Right ventricle myocardium inferior (tissue), 1 donor: ENCODE measurements at regions of chr1 and their contacts with region 1.

Region 1: DNA sequence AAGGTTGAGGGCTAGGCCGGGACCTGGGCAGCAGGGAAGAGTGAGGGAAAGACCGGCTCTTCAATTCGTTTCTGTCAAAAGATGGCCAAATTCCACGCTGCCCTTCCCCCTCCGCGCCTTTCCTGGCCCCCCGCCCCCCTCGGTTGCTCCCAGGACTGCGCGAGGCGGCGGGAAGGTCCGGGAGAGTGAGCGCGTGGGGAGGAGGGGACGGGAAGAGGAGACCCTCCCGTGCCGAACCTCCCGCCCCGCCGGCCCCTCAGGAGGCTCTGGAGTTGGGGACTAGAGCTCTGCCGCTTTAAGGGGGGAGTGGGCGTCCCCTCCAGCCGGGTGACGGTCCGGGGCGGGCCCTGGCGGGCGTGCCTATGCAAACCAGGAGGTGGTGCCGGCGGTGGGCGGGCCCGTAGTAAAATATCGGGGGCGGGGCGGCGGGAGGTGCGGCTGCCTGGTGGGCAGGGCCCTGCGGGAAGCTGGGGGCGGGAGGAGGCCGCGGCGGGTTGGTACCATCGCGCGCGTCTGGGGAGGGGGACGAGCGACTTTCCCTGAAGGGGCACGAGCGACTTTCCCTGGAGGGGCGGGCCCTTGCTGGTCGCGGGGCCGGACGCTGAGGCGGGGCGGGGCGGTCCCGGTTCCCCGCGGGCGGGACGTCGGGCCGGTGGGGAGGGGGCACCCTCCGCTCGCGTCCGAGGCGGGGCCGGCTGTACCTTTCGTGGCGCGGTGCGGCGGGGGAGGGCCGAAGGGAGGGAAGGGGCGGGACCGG is 58.2 kb downstream of the BCL9 start:
- DNase-seq: peak; percentile 99
- ATAC-seq: peak; percentile 95

Region 2: DNA sequence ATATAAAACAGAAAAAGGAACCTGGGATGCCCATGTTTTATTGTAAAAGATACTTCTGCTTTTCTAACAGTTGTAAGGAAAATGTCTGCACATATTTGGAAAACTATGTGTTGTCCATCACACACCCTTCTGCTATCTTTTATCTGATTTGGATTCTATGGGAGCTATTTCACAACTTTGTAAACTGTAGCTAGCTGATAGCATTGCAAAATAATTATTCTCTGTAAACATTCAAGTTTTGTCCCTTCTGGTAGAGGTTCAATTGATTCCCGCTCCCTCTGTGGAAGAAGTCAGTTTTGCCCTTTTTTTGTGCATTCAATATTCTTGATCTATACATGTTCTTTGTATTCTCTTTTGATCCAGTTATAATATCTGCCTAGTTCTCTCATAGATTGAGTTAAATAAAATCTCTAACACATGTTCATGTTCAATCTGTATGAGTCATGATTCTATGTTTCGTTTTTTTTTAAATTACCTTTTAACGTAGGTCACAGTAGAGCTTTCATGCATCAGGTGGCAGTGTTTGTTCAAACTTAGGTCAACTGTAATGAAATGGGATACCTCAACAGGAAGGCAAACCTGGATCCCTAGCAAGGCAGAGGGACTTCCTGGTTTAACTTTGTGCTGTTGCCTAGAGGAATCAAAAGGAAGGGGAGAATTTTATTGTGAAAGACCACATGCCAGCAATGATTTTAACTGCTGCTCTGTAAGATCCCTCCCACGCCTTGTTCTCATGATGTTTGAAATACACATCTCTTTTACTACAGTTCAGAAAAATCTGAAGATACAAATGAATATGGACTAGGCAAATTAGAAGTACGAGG is 84.3 kb before region 1 on chr1:
- intact Hi-C with region 1: loop called (anchors 5 kb)
- DNase-seq: no peak
- ATAC-seq: peak; percentile 77

Region 3: DNA sequence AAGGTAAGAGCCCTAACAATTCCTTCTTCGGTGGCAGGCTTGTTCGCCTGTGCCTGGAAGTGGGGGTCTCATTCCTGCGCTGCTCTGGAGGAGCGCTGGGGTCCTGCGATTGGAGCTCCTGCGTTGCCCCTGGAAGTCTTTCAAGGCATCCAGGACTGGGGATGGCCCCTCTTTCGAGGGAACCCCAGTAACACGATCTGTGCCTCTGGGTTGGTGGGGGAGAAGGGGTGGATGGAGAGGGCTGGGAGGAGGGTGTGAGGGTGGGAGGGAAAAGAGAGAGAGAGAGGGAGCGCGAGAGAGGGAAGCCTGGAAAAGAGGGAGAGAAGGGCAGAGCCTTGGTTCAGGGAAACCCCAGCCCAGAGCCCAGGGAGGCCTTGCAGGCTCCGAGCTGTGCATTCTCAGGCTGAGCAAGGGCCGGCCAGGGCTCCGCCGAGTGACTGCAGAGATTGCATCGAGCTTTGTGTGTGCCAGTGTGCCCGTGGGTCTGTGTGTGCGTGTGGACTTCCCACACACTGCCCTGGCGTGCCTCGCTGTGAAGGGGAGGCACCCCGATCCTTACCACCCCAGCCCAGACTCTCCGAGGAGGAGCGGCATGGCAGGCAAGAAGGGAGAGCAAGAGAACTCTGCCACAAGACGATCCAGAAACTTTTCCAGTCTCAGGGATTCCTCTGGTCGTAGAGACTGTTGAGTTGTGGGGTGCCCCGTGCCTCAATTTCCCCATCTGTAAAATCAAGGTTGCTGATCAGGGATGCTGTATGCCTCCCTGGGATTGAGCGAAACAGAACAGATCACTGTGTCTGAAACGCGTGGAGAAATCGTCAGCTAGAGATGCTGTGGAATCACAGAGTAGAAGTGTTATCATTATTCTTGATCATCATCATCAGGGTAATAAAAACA is 57.6 kb before region 1 on chr1:
- intact Hi-C with region 1: loop called (anchors 1 kb)
- DNase-seq: peak; percentile 78
- ATAC-seq: peak; percentile 65